HCT116 (cell line): ENCODE measurements at regions of chr20 and their contacts with region 1.

Region 1: DNA sequence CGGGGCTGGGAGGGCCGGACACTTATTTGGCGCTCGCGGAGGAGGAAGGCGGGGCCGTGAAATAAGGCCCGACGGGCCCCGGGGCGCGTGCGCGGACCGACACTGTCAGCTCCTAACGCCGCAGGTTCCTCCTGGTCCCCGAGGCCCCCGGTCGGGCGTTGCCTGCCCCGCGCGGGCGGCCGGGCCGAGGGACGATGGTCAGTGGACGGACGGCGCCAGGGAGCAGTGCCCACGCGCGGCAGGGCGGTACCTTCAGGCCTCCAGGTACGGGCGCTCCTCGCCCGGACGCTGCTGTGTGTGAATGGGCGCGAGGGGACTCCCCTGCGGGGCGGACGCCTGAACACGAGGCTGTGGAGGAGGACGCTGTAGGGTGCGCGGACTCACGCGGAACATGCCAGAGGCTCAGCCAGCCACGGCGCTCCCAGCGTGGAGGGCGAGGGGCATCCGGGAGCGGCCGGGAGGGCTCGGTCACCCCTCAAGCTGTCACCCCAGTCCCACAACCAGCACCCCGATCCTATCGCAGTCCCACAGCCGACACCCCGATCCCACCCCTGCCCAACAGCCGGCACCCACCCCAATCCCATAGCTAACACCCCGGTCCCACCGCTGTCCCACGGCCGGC is 339 bp upstream of the GMEB2 start:
- DNase-seq: peak; percentile 87
- ATAC-seq: peak; percentile 74
- H3K4me3 ChIP-seq: peak overlapping the region; percentile 88 to 96
- H3K27ac ChIP-seq: peak overlapping the region; percentile 98
- H3K4me1 ChIP-seq: peaks cover 8 to 22% of the 10 kb centered on the region in 2 experiments
- H3K27me3 ChIP-seq: no peaks in the 10 kb centered on the region
- CTCF ChIP-seq: no peak
- POLR2A ChIP-seq: peak; percentile 45
- RAD21 ChIP-seq: no peak

Region 2: GRCh38 chr20:63574156-63574828 is 52.9 kb before region 1 on chr20 and contains the start of gene HELZ2:
- CTCF ChIA-PET with region 1: no interaction called
- POLR2A ChIA-PET with region 1: interaction called, 4 read pairs
- RAD21 ChIA-PET with region 1: no interaction called
- intact Hi-C with region 1: loop called (anchors 10 kb)
- DNase-seq: peak; percentile 16
- ATAC-seq: peak; percentile 86
- H3K4me3 ChIP-seq: peak within 1 kb of the TSS; percentile 83 to 86
- H3K27ac ChIP-seq: peak within 1 kb of the TSS; percentile 44; the same call in 1 of the 2 replicates
- H3K4me1 ChIP-seq: peaks cover 12 to 27% of the 10 kb centered on the region in 2 experiments
- H3K27me3 ChIP-seq: no peaks in the 10 kb centered on the region
- CTCF ChIP-seq: no peak
- POLR2A ChIP-seq: peak; percentile 33
- RAD21 ChIP-seq: no peak
- total RNA-seq, gene HELZ2: 44.0 TPM

Region 3: DNA sequence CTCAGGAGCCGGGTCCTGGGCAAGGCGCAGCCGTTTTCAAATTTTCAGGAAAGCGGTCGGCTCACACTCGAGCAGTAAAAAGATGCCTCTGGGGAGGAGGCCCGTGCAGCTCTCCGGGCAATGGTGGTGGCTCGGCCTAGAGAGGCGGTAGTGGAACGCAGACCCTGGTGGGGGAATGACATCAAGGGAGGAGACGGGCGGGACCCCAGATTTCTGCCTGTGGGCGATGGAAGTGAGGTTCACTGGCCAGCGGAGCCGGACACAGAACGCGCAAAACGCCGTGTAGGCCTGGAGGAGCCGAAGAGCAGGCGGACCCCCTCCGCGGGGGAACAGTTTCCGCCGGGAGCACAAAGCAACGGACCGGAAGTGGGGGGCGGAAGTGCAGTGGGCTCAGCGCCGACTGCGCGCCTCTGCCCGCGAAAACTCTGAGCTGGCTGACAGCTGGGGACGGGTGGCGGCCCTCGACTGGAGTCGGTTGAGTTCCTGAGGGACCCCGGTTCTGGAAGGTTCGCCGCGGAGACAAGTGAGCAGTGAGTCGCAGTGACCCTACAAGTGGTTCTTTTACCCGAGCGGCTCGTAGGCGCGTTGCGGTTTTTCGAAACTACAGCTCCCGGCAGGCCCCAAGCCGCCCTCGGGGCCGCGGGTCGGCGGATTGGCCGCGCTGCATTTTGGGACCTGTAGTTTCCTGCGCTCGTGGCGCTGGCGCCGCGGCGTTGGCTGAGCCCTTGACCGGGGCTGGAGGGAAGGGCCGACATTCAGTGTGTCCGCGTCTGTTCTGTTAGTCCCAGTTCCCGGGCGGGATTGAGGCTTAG is 30.9 kb after region 1 on chr20 and contains the start of gene RTEL1:
- CTCF ChIA-PET with region 1: no interaction called
- POLR2A ChIA-PET with region 1: interaction called, 3 read pairs
- RAD21 ChIA-PET with region 1: no interaction called
- intact Hi-C with region 1: loop called (anchors 1 kb)
- DNase-seq: peak; percentile 80
- ATAC-seq: peak; percentile 86
- H3K4me3 ChIP-seq: peak within 1 kb of the TSS; percentile 82 to 99
- H3K27ac ChIP-seq: peak within 1 kb of the TSS; percentile 73
- H3K4me1 ChIP-seq: peaks cover 16 to 41% of the 10 kb centered on the region in 2 experiments
- H3K27me3 ChIP-seq: no peaks in the 10 kb centered on the region
- CTCF ChIP-seq: no peak
- POLR2A ChIP-seq: no peak
- RAD21 ChIP-seq: no peak
- total RNA-seq, gene RTEL1: 58.0 TPM

Region 4: GRCh38 chr20:63682384-63683139 is 55.3 kb after region 1 on chr20:
- CTCF ChIA-PET with region 1: no interaction called
- POLR2A ChIA-PET with region 1: interaction called, 3 read pairs
- RAD21 ChIA-PET with region 1: interaction called in 1 of 2 experiments, 4 read pairs
- intact Hi-C with region 1: loop called (anchors 2 kb)
- DNase-seq: peak; percentile 97
- ATAC-seq: peak; percentile 91
- H3K4me3 ChIP-seq: peak overlapping the region; percentile 24 to 51
- H3K27ac ChIP-seq: peak overlapping the region; percentile 100
- H3K4me1 ChIP-seq: peaks cover 59 to 71% of the 10 kb centered on the region in 2 experiments
- H3K27me3 ChIP-seq: no peaks in the 10 kb centered on the region
- CTCF ChIP-seq: no peak
- POLR2A ChIP-seq: peak; percentile 49
- RAD21 ChIP-seq: no peak

Region 5: GRCh38 chr20:63750807-63751470 is 123.7 kb after region 1 on chr20:
- CTCF ChIA-PET with region 1: no interaction called
- POLR2A ChIA-PET with region 1: no interaction called
- RAD21 ChIA-PET with region 1: no interaction called
- intact Hi-C with region 1: no loop called
- DNase-seq: no peak
- ATAC-seq: no peak
- H3K4me3 ChIP-seq: no peak overlapping the region
- H3K27ac ChIP-seq: no peak overlapping the region
- H3K4me1 ChIP-seq: no peaks in the 10 kb centered on the region
- H3K27me3 ChIP-seq: no peaks in the 10 kb centered on the region
- CTCF ChIP-seq: no peak
- POLR2A ChIP-seq: no peak
- RAD21 ChIP-seq: no peak